Right cardiac atrium (tissue), 5 donors: ENCODE measurements at regions of chr4 and their contacts with region 1.

Region 1: GRCh38 chr4:139184129-139184528 is 7.1 kb upstream of the ELF2 start:
- DNase-seq: no peak
- ATAC-seq: no peak
- H3K4me3 ChIP-seq: no peak overlapping the region
- H3K27ac ChIP-seq: no peak overlapping the region
- H3K4me1 ChIP-seq: peaks cover 2% of the 10 kb centered on the region
- H3K27me3 ChIP-seq: no peaks in the 10 kb centered on the region

Region 2: DNA sequence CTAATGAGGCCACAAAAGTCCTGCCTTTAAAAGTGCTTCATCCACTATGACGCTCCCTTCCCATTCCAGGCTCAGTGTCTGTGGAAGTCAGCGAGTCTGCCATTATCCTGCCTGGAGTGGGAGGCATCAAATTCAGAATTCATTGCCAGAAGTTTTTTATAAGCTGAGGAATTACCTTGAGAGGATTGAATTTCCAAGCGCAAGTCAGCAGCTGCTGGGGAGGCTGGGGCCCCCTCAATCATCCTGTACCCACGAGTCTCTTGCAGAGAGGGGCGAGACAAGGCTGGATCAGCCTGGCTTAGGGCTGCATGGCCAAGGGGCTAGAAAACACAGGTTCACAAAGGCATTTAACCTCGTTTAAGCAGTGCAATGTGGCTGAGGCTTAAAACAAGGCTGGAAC is 339.1 kb before region 1 on chr4:
- intact Hi-C with region 1: no loop called
- DNase-seq: no peak
- ATAC-seq: no peak
- H3K4me3 ChIP-seq: no peak overlapping the region
- H3K27ac ChIP-seq: no peak overlapping the region
- H3K4me1 ChIP-seq: no peaks in the 10 kb centered on the region
- H3K27me3 ChIP-seq: no peaks in the 10 kb centered on the region

Region 3: DNA sequence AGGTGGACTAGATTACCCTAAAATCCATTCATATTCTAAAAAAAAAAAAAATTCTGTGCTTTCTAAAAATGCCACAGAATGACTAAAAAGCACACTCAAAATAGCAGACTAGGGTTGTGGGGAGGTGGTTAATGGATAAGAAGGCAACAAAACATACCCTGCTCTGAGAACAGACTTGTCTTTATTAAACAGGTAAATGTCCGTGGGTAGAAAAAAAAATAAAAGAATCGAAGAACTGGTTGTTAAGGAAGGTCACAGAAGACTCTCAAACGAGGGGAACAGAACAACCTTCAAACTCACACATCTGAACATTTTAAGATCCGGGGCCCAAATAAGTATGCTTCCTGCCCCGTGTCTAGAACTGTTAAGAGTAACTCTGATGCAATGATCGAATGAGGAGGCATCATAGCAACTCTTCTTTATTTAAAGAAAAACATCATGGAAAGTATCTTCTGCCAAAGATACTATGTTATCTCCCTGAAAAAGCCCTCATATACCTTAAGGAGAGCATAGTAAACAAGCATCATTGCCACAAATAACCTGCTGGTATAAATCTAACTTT is 75.5 kb before region 1 on chr4:
- intact Hi-C with region 1: loop called in 1 of 4 experiments (anchors 10 kb)
- DNase-seq: no peak
- ATAC-seq: no peak
- H3K4me3 ChIP-seq: no peak overlapping the region
- H3K27ac ChIP-seq: no peak overlapping the region
- H3K4me1 ChIP-seq: no peaks in the 10 kb centered on the region
- H3K27me3 ChIP-seq: no peaks in the 10 kb centered on the region